ENCODE measurements at regions of chr1 and their contacts with region 1.

Region 1: DNA sequence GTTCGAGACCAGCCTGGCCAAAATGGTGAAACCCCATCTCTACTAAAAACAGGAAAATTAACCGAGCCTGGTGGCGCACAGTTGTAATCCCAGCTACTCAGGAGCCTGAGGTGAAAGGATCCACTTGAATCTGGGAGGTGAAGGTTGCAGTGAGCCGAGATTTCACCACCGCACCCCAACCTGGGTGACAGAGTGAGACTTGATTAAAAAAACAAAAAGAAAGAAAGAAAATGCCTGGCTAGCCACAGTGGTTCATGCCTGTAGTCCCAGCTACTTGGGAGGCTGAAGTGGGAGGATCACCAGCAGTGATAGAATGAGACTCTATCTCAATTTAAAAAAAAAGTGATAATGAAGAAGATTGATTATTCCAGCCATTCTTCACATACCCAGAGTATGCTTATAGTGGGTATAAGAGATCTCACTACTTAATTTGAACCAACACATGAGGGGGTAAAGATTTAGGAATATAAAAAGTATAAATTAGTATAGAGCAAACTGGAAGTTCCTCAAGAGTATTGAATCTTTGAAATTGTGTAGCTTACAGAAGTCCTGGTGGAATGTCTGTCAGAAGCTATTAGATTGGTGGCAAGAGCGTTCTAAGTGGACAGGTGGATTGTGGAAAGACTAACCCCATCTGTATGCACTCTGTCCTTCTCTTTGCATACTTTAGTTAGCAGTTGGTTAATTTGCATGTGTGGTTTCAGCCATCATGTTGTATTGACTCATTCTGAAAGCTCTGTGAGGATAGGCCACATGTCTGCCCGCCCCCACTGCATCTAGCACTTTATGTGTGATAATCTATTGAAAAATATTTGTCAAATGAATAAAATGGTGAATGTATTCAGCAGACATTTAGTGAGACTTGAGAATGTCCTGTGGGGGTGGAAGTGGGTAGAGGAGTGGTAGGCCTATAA is 25.0 kb downstream of the RLF start:
- DNase-seq: peak; percentile 63
- H3K4me3 Mint-ChIP-seq: no peak overlapping the region
- H3K27ac Mint-ChIP-seq: peak overlapping the region; percentile 50
- H3K4me1 Mint-ChIP-seq: peaks cover 48% of the 10 kb centered on the region
- H3K27me3 Mint-ChIP-seq: no peaks in the 10 kb centered on the region

Region 2: DNA sequence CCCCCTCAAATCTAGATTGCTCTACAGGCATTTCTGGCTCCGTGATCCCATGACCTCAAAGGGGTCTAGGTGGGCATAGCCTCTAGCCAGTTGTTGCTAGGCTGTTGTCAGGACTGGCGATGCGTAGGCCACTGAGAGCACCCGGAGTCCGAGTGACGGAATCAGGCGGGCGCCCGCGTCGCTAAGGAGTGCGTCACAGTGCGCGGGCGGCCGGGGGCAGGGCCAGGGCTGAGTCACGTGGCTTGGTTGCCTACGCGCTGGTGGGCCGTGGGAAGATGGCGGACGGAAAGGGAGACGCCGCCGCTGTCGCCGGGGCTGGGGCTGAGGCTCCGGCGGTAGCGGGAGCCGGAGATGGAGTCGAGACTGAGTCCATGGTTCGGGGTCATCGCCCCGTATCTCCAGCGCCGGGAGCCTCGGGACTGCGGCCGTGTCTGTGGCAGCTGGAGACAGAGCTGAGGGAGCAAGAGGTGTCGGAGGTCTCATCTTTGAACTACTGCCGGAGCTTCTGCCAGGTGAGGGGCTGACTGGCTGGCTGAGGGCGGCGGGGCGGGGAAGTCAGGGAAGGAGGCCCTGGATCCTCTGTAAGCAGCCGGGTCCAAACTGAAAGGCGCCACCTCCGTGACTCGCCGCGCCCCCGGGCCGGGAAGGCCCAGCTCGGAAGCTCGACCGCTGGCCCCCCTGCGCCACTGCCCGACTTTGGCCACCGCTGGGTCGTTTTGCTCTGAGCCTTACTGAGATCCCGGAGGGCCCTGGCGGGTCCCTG is 24.9 kb before region 1 on chr1 and contains the start of gene RLF:
- CTCF ChIA-PET with region 1: interaction called, 3 read pairs
- POLR2A ChIA-PET with region 1: interaction called, 10 read pairs
- DNase-seq: peak; percentile 96
- H3K4me3 Mint-ChIP-seq: no peak within 1 kb of the TSS
- H3K27ac Mint-ChIP-seq: no peak within 1 kb of the TSS
- H3K4me1 Mint-ChIP-seq: peaks cover 5% of the 10 kb centered on the region
- H3K27me3 Mint-ChIP-seq: no peaks in the 10 kb centered on the region
- total RNA-seq, gene RLF: 23.8 to 24.6 TPM

Measured in activated CD4-positive, alpha-beta memory T cell treated with anti-CD3 and anti-CD28 coated beads, Interleukin-2, amount 10 ng/mL, durations not matched to agents 7 days and 5 days (primary cell).